K562 (cell line): ENCODE measurements at regions of chr2 and their contacts with region 1.

Region 1: GRCh38 chr2:227106845-227107759 is 56.9 kb downstream of the COL4A4 start:
- DNase-seq: peak in 3 of 4 experiments; percentile 6 to 54 (median 15)
- ATAC-seq: peak; percentile 88
- H3K4me3 ChIP-seq: no peak overlapping the region
- H3K27ac ChIP-seq: no peak overlapping the region
- H3K4me1 ChIP-seq: no peaks in the 10 kb centered on the region
- H3K27me3 ChIP-seq: no peaks in the 10 kb centered on the region
- CTCF ChIP-seq: peak; percentile 64 to 74 (median 65)
- EP300 ChIP-seq: no peak
- POLR2A ChIP-seq: no peak
- RAD21 ChIP-seq: peak; percentile 61 to 82

Region 2: GRCh38 chr2:226813148-226813701 is 293.9 kb before region 1 on chr2:
- CTCF ChIA-PET with region 1: interaction called, 7 read pairs
- POLR2A ChIA-PET with region 1: no interaction called
- in situ Hi-C with region 1: no loop called
- intact Hi-C with region 1: loop called (anchors 2 kb)
- DNase-seq: peak in 1 of 4 experiments; percentile 20
- ATAC-seq: peak; percentile 72
- H3K4me3 ChIP-seq: no peak overlapping the region
- H3K27ac ChIP-seq: no peak overlapping the region
- H3K4me1 ChIP-seq: no peaks in the 10 kb centered on the region
- H3K27me3 ChIP-seq: 0 out of 5 replicates have a peak, but pooled peaks cover 0 to 4% of the 10 kb centered on the region in 2 experiments
- CTCF ChIP-seq: peak; percentile 50 to 64 (median 54)
- EP300 ChIP-seq: no peak
- POLR2A ChIP-seq: no peak
- RAD21 ChIP-seq: peak; percentile 49 to 76

Region 3: DNA sequence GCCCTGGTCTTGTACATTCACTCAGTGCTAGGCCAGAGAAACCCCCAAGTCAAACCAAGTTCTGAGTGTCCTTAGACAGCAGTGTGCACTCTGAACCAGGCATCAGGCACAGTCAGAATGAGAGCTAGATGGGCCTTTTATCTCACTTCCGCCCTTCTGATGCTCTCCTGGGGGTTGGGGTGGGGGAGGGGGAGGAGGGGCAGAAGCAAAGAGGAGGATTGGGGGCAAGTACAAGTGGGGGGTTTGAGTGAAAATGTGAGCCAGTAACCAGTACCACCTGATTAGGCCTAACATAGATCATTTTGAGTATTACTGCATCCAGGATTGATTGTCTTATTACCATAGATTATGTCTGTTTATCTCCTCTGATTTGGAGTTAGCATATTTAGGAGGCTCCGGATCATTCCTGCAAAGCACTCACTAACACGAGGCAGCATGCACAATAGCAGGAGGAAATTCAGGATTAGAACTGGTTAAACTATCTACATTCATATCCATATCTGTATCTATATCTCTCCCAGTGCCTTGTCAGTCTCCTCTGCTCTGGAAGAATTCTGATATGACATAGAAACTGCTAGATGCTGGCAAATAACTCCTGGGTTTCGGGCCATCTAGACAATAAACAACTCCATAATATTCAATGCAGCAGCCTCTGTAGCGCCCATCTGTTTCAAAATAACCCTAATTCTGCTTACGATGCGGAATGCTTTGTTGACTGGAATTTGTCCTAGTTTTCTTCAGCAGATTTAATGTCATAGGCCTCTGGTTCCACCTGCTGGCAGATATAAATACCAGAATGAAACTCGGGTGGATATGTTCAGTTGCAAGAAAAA is 122.1 kb before region 1 on chr2:
- CTCF ChIA-PET with region 1: no interaction called
- POLR2A ChIA-PET with region 1: no interaction called
- in situ Hi-C with region 1: no loop called
- intact Hi-C with region 1: loop called (anchors 1 kb)
- DNase-seq: peak; percentile 17 to 65 (median 31)
- ATAC-seq: peak; percentile 90
- H3K4me3 ChIP-seq: no peak overlapping the region
- H3K27ac ChIP-seq: peak overlapping the region; percentile 41; the same call in 2 of the 3 replicates
- H3K4me1 ChIP-seq: peaks cover 0 to 21% of the 10 kb centered on the region in 2 experiments; a peak in 3 of 5 replicates
- H3K27me3 ChIP-seq: no peaks in the 10 kb centered on the region
- CTCF ChIP-seq: peak; percentile 42 to 70 (median 50); a peak in 4 of 6 replicates
- EP300 ChIP-seq: no peak
- POLR2A ChIP-seq: no peak
- RAD21 ChIP-seq: peak; percentile 64 to 71

Region 4: GRCh38 chr2:227038550-227039189 is 68.4 kb before region 1 on chr2:
- CTCF ChIA-PET with region 1: no interaction called
- POLR2A ChIA-PET with region 1: no interaction called
- in situ Hi-C with region 1: no loop called
- intact Hi-C with region 1: loop called (anchors 5 kb)
- DNase-seq: no peak
- ATAC-seq: no peak
- H3K4me3 ChIP-seq: no peak overlapping the region
- H3K27ac ChIP-seq: no peak overlapping the region
- H3K4me1 ChIP-seq: no peaks in the 10 kb centered on the region
- H3K27me3 ChIP-seq: no peaks in the 10 kb centered on the region
- CTCF ChIP-seq: no peak
- EP300 ChIP-seq: no peak
- POLR2A ChIP-seq: no peak
- RAD21 ChIP-seq: 0 out of 4 replicates have a peak, but pooled peaks of 1 of the 2 experiments have one; percentile 11

Region 5: GRCh38 chr2:227192491-227192890 is 85.4 kb after region 1 on chr2:
- CTCF ChIA-PET with region 1: no interaction called
- POLR2A ChIA-PET with region 1: no interaction called
- in situ Hi-C with region 1: no loop called
- intact Hi-C with region 1: no loop called
- DNase-seq: no peak
- ATAC-seq: no peak
- H3K4me3 ChIP-seq: no peak overlapping the region
- H3K27ac ChIP-seq: no peak overlapping the region
- H3K4me1 ChIP-seq: no peaks in the 10 kb centered on the region
- H3K27me3 ChIP-seq: no peaks in the 10 kb centered on the region
- CTCF ChIP-seq: no peak
- EP300 ChIP-seq: no peak
- POLR2A ChIP-seq: no peak
- RAD21 ChIP-seq: no peak